ENCODE measurements at regions of chr17 and their contacts with region 1.

Region 1: GRCh38 chr17:67441052-67441927 is 64.2 kb downstream of the PITPNC1 start:
- DNase-seq: peak; percentile 90
- H3K4me3 Mint-ChIP-seq: peak overlapping the region; percentile 75
- H3K27ac Mint-ChIP-seq: peak overlapping the region; percentile 96
- H3K4me1 Mint-ChIP-seq: peaks cover 76% of the 10 kb centered on the region
- H3K27me3 Mint-ChIP-seq: no peaks in the 10 kb centered on the region

Region 2: DNA sequence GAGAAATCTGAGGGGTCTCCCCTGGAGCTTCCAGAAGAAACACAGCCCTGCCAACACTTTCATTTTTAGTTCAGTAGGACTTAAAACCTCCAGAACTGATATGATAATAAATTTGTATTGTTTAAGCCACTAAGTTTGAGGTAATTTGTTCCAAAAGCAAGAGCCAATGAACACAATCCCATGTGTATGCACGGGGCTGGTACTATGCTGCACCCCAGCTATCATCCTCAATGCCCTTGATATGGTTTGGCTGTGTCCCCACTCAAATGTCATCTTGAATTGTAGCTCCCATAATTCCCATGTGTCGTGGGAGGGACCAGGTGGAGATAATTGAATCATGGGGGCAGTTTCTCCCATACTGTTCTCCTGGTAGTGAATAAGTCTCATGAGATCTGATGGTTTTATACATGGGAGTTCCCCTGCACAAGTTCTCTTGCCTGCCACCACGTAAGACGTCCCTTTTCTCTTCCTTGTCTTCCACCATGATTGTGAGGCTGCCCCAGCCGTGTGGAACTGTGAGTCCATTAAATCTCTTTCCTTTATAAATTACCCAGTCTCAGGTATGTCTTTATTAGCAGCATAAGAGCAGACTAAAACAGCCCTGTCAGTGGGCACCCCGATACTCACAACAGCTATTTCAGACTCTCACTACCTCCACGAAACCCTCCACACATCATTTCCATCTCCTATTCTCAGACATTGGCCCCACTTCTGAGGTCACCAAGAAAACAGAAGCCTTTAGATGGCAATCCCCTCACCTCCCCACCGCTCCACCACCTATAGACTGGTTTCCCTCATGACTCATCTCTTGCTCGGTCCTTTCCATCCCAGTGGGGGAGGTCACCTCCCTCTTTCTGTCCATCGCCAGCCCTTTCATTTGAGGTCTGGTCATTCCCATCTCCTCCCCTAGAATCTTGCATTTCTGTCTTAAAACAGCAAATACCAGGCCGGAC is 405.9 kb before region 1 on chr17:
- CTCF ChIA-PET with region 1: no interaction called
- intact Hi-C with region 1: no loop called
- DNase-seq: peak; percentile 19
- H3K4me3 Mint-ChIP-seq: no peak overlapping the region
- H3K27ac Mint-ChIP-seq: peak overlapping the region; percentile 8
- H3K4me1 Mint-ChIP-seq: peaks cover 6% of the 10 kb centered on the region
- H3K27me3 Mint-ChIP-seq: no peaks in the 10 kb centered on the region

Region 3: GRCh38 chr17:67452681-67453554 is 11.6 kb after region 1 on chr17:
- CTCF ChIA-PET with region 1: interaction called, 11 read pairs
- intact Hi-C with region 1: loop called (anchors 1 kb)
- DNase-seq: peak; percentile 65
- H3K4me3 Mint-ChIP-seq: peak overlapping the region; percentile 53
- H3K27ac Mint-ChIP-seq: peak overlapping the region; percentile 91
- H3K4me1 Mint-ChIP-seq: peaks cover 91% of the 10 kb centered on the region
- H3K27me3 Mint-ChIP-seq: no peaks in the 10 kb centered on the region